ENCODE measurements at regions of chr3 and their contacts with region 1.

Region 1: GRCh38 chr3:112333381-112334317 is 693 bp downstream of the CD200 start:
- DNase-seq: peak; percentile 17
- H3K4me3 Mint-ChIP-seq: peak overlapping the region; percentile 85
- H3K27ac Mint-ChIP-seq: peak overlapping the region; percentile 81
- H3K4me1 Mint-ChIP-seq: peaks cover 42% of the 10 kb centered on the region
- H3K27me3 Mint-ChIP-seq: no peaks in the 10 kb centered on the region

Region 2: GRCh38 chr3:112321867-112322649 is 11.6 kb before region 1 on chr3:
- CTCF ChIA-PET with region 1: interaction called, 10 read pairs
- POLR2A ChIA-PET with region 1: no interaction called
- DNase-seq: no peak
- H3K4me3 Mint-ChIP-seq: no peak overlapping the region
- H3K27ac Mint-ChIP-seq: no peak overlapping the region
- H3K4me1 Mint-ChIP-seq: peaks cover 3% of the 10 kb centered on the region
- H3K27me3 Mint-ChIP-seq: peaks cover 14% of the 10 kb centered on the region